ENCODE measurements at regions of chr10 and their contacts with region 1.

Region 1: GRCh38 chr10:60778214-60779029 is at the start of gene CDK1:
- DNase-seq: peak; percentile 98
- H3K4me3 Mint-ChIP-seq: peak within 1 kb of the TSS; percentile 99
- H3K27ac Mint-ChIP-seq: peak within 1 kb of the TSS; percentile 97
- H3K4me1 Mint-ChIP-seq: peaks cover 21% of the 10 kb centered on the region
- H3K27me3 Mint-ChIP-seq: no peaks in the 10 kb centered on the region
- total RNA-seq, gene CDK1: 173 to 180 TPM

Region 2: DNA sequence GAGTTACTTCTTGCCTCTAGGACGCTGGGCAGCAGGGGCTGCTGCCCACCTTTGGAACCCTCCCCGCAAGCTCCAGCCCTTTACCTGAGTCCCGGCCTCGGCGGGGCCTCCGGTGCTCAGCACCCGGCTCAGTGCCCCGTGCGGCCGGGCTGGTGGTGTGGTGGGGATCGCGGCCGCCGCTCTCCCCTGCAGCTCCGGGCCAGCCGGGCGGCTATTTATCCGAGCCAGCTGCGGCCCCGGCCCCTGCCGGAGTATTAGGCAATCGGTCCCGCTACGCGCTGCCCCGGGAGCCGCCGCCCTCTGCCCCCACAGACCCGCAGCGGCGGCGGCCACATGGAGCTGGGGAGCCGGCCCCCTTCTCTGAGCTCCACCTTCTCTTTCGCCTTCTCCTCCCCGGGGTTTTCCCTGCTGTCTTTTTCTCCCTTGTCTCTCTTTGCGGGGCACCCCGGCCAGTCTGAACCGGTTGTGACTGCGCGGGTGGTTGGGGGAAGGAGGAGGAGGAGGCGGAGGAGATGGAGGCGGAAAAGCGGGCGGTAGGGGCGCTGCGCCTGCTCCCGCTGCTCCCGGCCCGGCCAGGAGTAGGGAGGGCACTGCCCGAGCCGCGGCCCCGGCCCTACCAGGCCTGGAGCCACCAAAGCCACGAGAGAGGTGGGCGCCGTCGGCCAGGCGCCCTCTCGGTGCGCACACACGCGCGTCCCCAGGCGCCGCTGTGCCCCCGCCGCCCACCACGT is 1068.9 kb before region 1 on chr10 and contains the start of gene SLC16A9:
- CTCF ChIA-PET with region 1: no interaction called
- intact Hi-C with region 1: loop called (anchors 1 kb)
- DNase-seq: peak; percentile 89
- H3K4me3 Mint-ChIP-seq: peak within 1 kb of the TSS; percentile 72
- H3K27ac Mint-ChIP-seq: no peak within 1 kb of the TSS
- H3K4me1 Mint-ChIP-seq: peaks cover 8% of the 10 kb centered on the region
- H3K27me3 Mint-ChIP-seq: peaks cover 62% of the 10 kb centered on the region
- total RNA-seq, gene SLC16A9: 0.84 to 0.86 TPM

Region 3: GRCh38 chr10:60148264-60148840 is 630.1 kb before region 1 on chr10:
- CTCF ChIA-PET with region 1: no interaction called
- intact Hi-C with region 1: no loop called
- DNase-seq: no peak
- H3K4me3 Mint-ChIP-seq: no peak overlapping the region
- H3K27ac Mint-ChIP-seq: no peak overlapping the region
- H3K4me1 Mint-ChIP-seq: no peaks in the 10 kb centered on the region
- H3K27me3 Mint-ChIP-seq: no peaks in the 10 kb centered on the region

Region 4: DNA sequence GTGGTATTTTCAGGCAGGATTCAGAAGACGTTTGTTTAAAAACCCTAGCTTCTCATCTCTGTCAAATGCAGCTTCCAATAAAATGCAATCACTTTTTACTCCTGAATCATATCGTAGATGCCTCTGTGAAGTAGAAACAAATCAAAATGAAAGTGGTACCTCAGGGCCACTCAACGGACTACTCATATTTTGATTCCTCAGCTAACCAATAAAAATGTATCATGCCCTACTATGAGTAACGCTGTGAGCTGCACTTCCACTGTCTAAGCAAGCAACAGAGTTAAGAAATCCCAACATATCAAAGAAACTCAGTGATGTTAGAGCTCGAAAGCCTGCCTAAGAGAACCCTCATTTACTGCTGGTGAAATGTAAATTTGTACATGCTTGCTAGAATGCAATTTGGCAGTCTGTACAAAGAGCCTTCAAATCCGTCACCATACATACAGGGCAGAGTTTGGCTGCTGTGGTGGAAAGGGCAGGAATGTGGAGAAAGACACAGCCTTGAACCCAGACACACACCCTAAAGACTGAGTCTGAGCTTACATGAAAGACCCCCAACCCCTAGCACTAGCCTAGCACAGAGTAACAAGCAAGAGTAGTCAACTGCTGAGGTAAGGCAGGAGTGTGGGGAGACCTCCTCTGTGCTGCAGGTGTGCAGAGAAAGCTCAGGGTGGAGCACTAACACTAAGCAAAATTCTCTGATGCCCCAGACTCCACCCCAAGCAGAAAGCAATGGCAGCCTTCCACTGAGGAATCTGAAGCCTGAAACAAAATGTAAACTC is 540.3 kb before region 1 on chr10:
- CTCF ChIA-PET with region 1: no interaction called
- intact Hi-C with region 1: loop called (anchors 5 kb)
- DNase-seq: peak; percentile 34
- H3K4me3 Mint-ChIP-seq: no peak overlapping the region
- H3K27ac Mint-ChIP-seq: peak overlapping the region; percentile 11
- H3K4me1 Mint-ChIP-seq: peaks cover 17% of the 10 kb centered on the region
- H3K27me3 Mint-ChIP-seq: no peaks in the 10 kb centered on the region

Region 5: GRCh38 chr10:60733189-60733822 is 45.1 kb before region 1 on chr10:
- CTCF ChIA-PET with region 1: interaction called, 3 read pairs
- intact Hi-C with region 1: loop called (anchors 1 kb)
- DNase-seq: peak; percentile 39
- H3K4me3 Mint-ChIP-seq: peak overlapping the region; percentile 84
- H3K27ac Mint-ChIP-seq: no peak overlapping the region
- H3K4me1 Mint-ChIP-seq: peaks cover 32% of the 10 kb centered on the region
- H3K27me3 Mint-ChIP-seq: peaks cover 4% of the 10 kb centered on the region